Activated T-helper 1 cell treated with anti-CD3 and anti-CD28 coated beads, Interleukin-12 subunit alpha, Interleukin-12 subunit beta, Interleukin-2, Interleukin-4 antibody, amounts not matched to agents 30 ng/mL and 10 ng/mL and 1 ng/mL, durations not matched to agents 14 hours and 24 hours and 36 hours (primary cell): ENCODE measurements at regions of chr14 and their contacts with region 1.

Region 1: DNA sequence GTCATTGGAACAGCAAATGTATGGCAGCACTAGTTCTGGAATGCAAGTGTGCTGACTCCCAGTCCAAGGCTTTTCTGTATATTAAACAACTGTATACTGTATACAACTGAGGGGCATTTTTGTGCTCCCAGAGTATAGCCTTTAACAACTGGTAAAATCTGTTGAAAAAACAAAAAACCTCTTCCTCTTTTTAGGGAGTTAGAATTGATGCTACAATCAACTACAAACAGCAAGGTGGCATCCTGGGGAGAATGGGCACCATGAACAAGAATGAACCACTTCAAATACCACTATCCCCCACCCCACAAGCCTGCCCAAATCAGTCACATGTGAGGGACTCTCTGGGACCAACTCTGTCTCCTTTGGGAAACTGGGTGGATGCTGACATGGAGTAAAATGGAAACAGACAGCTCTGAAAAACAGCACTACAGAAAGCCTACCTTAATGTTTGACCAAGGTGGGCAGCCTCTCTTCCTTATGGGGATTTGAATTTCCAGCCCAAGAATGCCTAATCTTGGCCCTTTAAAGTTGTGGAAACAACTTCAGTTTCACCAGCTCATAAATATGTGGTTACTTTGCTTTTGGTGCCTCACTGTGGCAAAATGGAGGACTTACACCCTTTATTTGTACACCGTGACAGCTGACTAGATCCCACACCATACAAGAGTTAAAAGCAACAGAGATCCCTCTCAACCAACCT is 7.5 kb downstream of the VTI1B start:
- DNase-seq: peak; percentile 14
- H3K4me3 Mint-ChIP-seq: no peak overlapping the region
- H3K27ac Mint-ChIP-seq: no peak overlapping the region
- H3K4me1 Mint-ChIP-seq: peaks cover 33% of the 10 kb centered on the region
- H3K27me3 Mint-ChIP-seq: no peaks in the 10 kb centered on the region

Region 2: GRCh38 chr14:67526676-67527459 is 140.0 kb before region 1 on chr14:
- intact Hi-C with region 1: loop called (anchors 1 kb)
- DNase-seq: peak; percentile 24
- H3K4me3 Mint-ChIP-seq: no peak overlapping the region
- H3K27ac Mint-ChIP-seq: no peak overlapping the region
- H3K4me1 Mint-ChIP-seq: no peaks in the 10 kb centered on the region
- H3K27me3 Mint-ChIP-seq: peaks cover 81% of the 10 kb centered on the region

Region 3: GRCh38 chr14:67599698-67600561 is 67.0 kb before region 1 on chr14 and contains the start of gene PIGH:
- intact Hi-C with region 1: loop called (anchors 1 kb)
- DNase-seq: peak; percentile 92
- H3K4me3 Mint-ChIP-seq: peak within 1 kb of the TSS; percentile 99
- H3K27ac Mint-ChIP-seq: peak within 1 kb of the TSS; percentile 94
- H3K4me1 Mint-ChIP-seq: peaks cover 44% of the 10 kb centered on the region
- H3K27me3 Mint-ChIP-seq: peaks cover 18% of the 10 kb centered on the region
- total RNA-seq, gene PIGH: 22.7 and 26.0 TPM in 2 replicates

Region 4: DNA sequence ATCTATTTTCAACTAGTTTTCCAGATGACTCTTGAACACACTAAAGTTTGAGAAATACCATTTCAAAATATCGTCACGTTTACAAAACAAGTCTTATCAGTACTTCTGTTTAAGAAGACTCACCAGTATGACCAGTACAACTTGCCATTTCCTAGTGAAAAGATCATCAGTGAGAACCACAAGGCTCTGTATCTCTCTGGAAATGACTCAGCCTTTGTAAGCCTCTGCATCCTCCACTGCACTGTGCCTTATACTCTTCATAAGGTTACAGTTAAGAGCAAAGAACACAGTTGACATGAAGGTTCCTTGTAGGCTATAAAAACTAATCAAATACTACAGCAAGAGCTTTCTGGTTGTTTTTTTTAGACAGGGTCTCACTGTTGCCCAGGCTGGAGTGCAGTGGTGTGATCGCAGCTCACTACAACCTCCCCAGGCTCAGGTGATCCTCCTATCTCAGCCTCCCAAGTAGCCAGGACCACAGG is 13.3 kb after region 1 on chr14:
- intact Hi-C with region 1: loop called (anchors 1 kb)
- DNase-seq: peak; percentile 42
- H3K4me3 Mint-ChIP-seq: peak overlapping the region; percentile 7
- H3K27ac Mint-ChIP-seq: peak overlapping the region; percentile 34
- H3K4me1 Mint-ChIP-seq: peaks cover 48% of the 10 kb centered on the region
- H3K27me3 Mint-ChIP-seq: no peaks in the 10 kb centered on the region